ENCODE measurements at regions of chr13 and their contacts with region 1.

Region 1: GRCh38 chr13:97975848-97976609 is 22.6 kb downstream of the IPO5 start:
- DNase-seq: peak; percentile 88
- H3K4me3 Mint-ChIP-seq: peak overlapping the region; percentile 93
- H3K27ac Mint-ChIP-seq: peak overlapping the region; percentile 98
- H3K4me1 Mint-ChIP-seq: peaks cover 33% of the 10 kb centered on the region
- H3K27me3 Mint-ChIP-seq: peaks cover 13% of the 10 kb centered on the region

Region 2: GRCh38 chr13:97432917-97433726 is 542.9 kb before region 1 on chr13:
- intact Hi-C with region 1: loop called (anchors 1 kb)
- DNase-seq: peak; percentile 99
- H3K4me3 Mint-ChIP-seq: peak overlapping the region; percentile 99
- H3K27ac Mint-ChIP-seq: peak overlapping the region; percentile 100
- H3K4me1 Mint-ChIP-seq: peaks cover 39% of the 10 kb centered on the region
- H3K27me3 Mint-ChIP-seq: peaks cover 12% of the 10 kb centered on the region

Region 3: DNA sequence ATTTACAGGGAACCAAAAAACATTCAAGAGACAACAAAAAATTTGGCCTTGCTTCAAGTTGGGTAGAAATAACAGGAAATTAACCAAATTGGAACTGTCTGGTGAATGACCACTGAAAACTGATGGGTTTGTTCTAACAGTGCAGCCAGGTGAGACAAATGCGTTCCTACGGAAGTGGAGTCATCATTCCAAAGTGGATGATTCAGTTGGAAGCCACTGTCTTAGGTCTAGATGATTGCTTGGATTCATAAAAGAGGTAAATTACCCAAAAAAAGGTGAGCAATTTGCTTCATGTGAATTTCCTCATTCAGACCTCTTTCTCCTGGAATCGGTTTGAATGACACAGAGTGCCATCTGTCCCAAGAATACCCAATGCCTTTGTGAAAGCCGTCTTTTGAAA is 109.7 kb before region 1 on chr13:
- intact Hi-C with region 1: no loop called
- DNase-seq: no peak
- H3K4me3 Mint-ChIP-seq: no peak overlapping the region
- H3K27ac Mint-ChIP-seq: no peak overlapping the region
- H3K4me1 Mint-ChIP-seq: no peaks in the 10 kb centered on the region
- H3K27me3 Mint-ChIP-seq: peaks cover 5% of the 10 kb centered on the region

Region 4: DNA sequence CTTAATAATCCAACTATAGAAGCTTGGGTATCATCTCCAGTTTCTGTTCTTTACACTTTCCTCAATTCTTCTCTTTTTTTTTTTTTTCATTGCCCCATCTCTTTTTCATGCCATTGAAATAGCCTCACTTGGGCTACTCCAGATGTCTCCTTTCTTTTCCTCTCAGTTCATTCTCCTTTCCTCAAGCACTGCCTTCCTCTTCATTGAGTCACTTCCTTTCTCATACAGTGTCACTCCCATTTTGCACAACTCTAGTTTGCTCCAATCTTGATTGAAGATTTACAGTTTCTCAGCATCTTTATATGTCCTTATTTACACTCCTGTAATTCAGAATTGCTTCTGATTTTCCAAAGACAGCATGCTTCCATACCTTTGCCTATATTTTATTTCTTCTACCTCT is 38.7 kb after region 1 on chr13:
- intact Hi-C with region 1: loop called (anchors 5 kb)
- DNase-seq: no peak
- H3K4me3 Mint-ChIP-seq: no peak overlapping the region
- H3K27ac Mint-ChIP-seq: no peak overlapping the region
- H3K4me1 Mint-ChIP-seq: peaks cover 6% of the 10 kb centered on the region
- H3K27me3 Mint-ChIP-seq: no peaks in the 10 kb centered on the region

Region 5: GRCh38 chr13:98664039-98664438 is 688.0 kb after region 1 on chr13:
- intact Hi-C with region 1: loop called (anchors 1 kb)
- DNase-seq: peak; percentile 21
- H3K4me3 Mint-ChIP-seq: no peak overlapping the region
- H3K27ac Mint-ChIP-seq: peak overlapping the region; percentile 72
- H3K4me1 Mint-ChIP-seq: peaks cover 15% of the 10 kb centered on the region
- H3K27me3 Mint-ChIP-seq: peaks cover 17% of the 10 kb centered on the region